ENCODE measurements at regions of chr11 and their contacts with region 1.

Region 1: GRCh38 chr11:66311965-66312548 is 4.8 kb downstream of the CD248 start:
- DNase-seq: peak; percentile 93 to 100 (median 100)
- ATAC-seq: peak; percentile 84
- H3K4me3 ChIP-seq: peak overlapping the region; percentile 92
- H3K4me3 Mint-ChIP-seq: peak overlapping the region; percentile 63 to 97 (median 94)
- H3K27ac ChIP-seq: peak overlapping the region; percentile 79
- H3K27ac Mint-ChIP-seq: peak overlapping the region; percentile 93 to 100 (median 98)
- H3K4me1 ChIP-seq: peaks cover 11 to 34% of the 10 kb centered on the region in 2 donors
- H3K4me1 Mint-ChIP-seq: peaks cover 17 to 34% (median 25%) of the 10 kb centered on the region in 7 donors
- H3K27me3 ChIP-seq: no peaks in the 10 kb centered on the region
- H3K27me3 Mint-ChIP-seq: peaks cover 0 to 2% (median 0%) of the 10 kb centered on the region in 5 donors

Region 2: GRCh38 chr11:66268283-66268951 is 43.6 kb before region 1 on chr11 and contains the start of gene RAB1B:
- CTCF ChIA-PET with region 1: interaction called, 5 read pairs
- POLR2A ChIA-PET with region 1: interaction called, 3 read pairs
- intact Hi-C with region 1: loop called (anchors 1 kb)
- DNase-seq: peak; percentile 99 to 100 (median 99)
- ATAC-seq: peak; percentile 89
- H3K4me3 ChIP-seq: peak within 1 kb of the TSS; percentile 91
- H3K4me3 Mint-ChIP-seq: peak within 1 kb of the TSS; percentile 88 to 100 (median 95)
- H3K27ac ChIP-seq: peak within 1 kb of the TSS; percentile 90
- H3K27ac Mint-ChIP-seq: peak within 1 kb of the TSS; percentile 95 to 99 (median 97)
- H3K4me1 ChIP-seq: peaks cover 16 to 38% of the 10 kb centered on the region in 2 donors
- H3K4me1 Mint-ChIP-seq: peaks cover 26 to 48% (median 34%) of the 10 kb centered on the region in 7 donors
- H3K27me3 ChIP-seq: no peaks in the 10 kb centered on the region
- H3K27me3 Mint-ChIP-seq: peaks cover 0 to 3% (median 0%) of the 10 kb centered on the region in 5 donors
- total RNA-seq, gene RAB1B: 60.6 to 151 (median 70.7) TPM

Region 3: GRCh38 chr11:66328307-66329144 is 16.5 kb after region 1 on chr11:
- CTCF ChIA-PET with region 1: interaction called, 52 read pairs
- POLR2A ChIA-PET with region 1: interaction called, 89 read pairs
- intact Hi-C with region 1: loop called (anchors 1 kb)
- DNase-seq: peak; percentile 72 to 88 (median 80)
- ATAC-seq: peak; percentile 89
- H3K4me3 ChIP-seq: peak overlapping the region; percentile 36
- H3K4me3 Mint-ChIP-seq: peak overlapping the region; percentile 18 to 81 (median 68)
- H3K27ac ChIP-seq: peak overlapping the region; percentile 82
- H3K27ac Mint-ChIP-seq: peak overlapping the region; percentile 65 to 97 (median 91)
- H3K4me1 ChIP-seq: peaks cover 26 to 40% of the 10 kb centered on the region in 2 donors
- H3K4me1 Mint-ChIP-seq: peaks cover 25 to 49% (median 46%) of the 10 kb centered on the region in 7 donors
- H3K27me3 ChIP-seq: no peaks in the 10 kb centered on the region
- H3K27me3 Mint-ChIP-seq: no peaks in the 10 kb centered on the region

Region 4: GRCh38 chr11:66371627-66372415 is 59.8 kb after region 1 on chr11 and contains the start of gene SLC29A2:
- CTCF ChIA-PET with region 1: interaction called, 6 read pairs
- POLR2A ChIA-PET with region 1: interaction called, 16 read pairs
- intact Hi-C with region 1: loop called (anchors 1 kb)
- DNase-seq: peak; percentile 53 to 85 (median 80)
- ATAC-seq: peak; percentile 89
- H3K4me3 ChIP-seq: peak within 1 kb of the TSS; percentile 72
- H3K4me3 Mint-ChIP-seq: peak within 1 kb of the TSS; percentile 81 to 96 (median 88)
- H3K27ac ChIP-seq: peak within 1 kb of the TSS; percentile 83
- H3K27ac Mint-ChIP-seq: peak within 1 kb of the TSS; percentile 79 to 95 (median 90)
- H3K4me1 ChIP-seq: peaks cover 4 to 8% of the 10 kb centered on the region in 2 donors
- H3K4me1 Mint-ChIP-seq: peaks cover 0 to 24% (median 13%) of the 10 kb centered on the region in 7 donors
- H3K27me3 ChIP-seq: no peaks in the 10 kb centered on the region
- H3K27me3 Mint-ChIP-seq: peaks cover 0 to 3% (median 0%) of the 10 kb centered on the region in 5 donors
- total RNA-seq, gene SLC29A2: 6.0 to 18.9 (median 12.0) TPM

Region 5: DNA sequence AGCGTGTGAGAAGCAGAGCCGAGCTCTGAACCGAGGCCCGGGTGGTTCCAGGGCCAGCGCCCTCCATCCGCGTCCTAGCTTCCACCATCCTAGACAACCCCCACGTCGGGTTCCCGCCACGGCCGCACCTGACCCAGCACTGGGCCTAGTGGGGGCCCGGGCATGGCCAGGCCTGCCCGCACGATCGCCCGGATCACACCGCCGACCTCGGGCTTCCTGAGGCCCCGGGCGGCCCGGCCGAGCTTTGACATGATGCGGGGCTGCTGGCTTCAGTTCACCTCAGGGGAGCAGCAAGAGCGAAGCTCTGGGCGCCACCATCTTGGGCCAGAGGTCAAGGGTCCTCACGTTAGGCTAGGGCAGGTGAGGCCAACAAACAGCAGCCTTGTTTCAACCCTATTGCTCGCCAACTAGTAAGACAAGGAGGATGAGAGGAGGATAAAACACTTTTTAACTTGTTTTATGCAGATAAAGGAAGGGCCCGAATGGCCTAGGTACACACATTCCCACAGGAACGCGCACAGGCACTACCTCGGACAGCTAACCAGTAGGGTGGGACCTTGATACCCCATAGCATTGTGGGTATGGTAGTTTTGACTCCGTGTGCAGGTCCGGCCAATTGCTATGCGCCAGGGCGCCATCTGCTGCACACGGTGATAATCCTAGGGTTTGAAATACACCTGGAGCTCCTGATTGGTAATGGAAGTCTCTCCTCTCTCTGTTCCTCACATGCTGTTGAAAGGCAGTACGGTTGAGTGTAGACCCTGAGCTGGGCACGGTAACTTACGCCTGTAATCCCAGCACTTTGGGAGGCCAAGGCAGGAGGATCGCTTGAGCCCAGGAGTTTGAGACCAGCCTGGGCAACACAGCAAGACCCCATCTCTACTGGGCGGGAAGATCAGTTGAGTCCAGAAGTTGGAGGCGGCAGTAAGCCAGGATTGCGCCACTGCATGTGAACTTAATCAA is 126.7 kb after region 1 on chr11 and contains the start of gene MRPL11:
- CTCF ChIA-PET with region 1: interaction called, 9 read pairs
- POLR2A ChIA-PET with region 1: interaction called, 8 read pairs
- intact Hi-C with region 1: loop called (anchors 1 kb)
- DNase-seq: peak; percentile 74 to 93 (median 90)
- ATAC-seq: peak; percentile 100
- H3K4me3 ChIP-seq: peak within 1 kb of the TSS; percentile 86
- H3K4me3 Mint-ChIP-seq: peak within 1 kb of the TSS; percentile 83 to 96 (median 90)
- H3K27ac ChIP-seq: peak within 1 kb of the TSS; percentile 84
- H3K27ac Mint-ChIP-seq: peak within 1 kb of the TSS; percentile 84 to 99 (median 94)
- H3K4me1 ChIP-seq: peaks cover 4 to 5% of the 10 kb centered on the region in 2 donors
- H3K4me1 Mint-ChIP-seq: peaks cover 7 to 13% (median 11%) of the 10 kb centered on the region in 7 donors
- H3K27me3 ChIP-seq: no peaks in the 10 kb centered on the region
- H3K27me3 Mint-ChIP-seq: peaks cover 0 to 7% (median 0%) of the 10 kb centered on the region in 5 donors
- total RNA-seq, gene MRPL11: 23.5 to 64.1 (median 24.0) TPM

Region 6: DNA sequence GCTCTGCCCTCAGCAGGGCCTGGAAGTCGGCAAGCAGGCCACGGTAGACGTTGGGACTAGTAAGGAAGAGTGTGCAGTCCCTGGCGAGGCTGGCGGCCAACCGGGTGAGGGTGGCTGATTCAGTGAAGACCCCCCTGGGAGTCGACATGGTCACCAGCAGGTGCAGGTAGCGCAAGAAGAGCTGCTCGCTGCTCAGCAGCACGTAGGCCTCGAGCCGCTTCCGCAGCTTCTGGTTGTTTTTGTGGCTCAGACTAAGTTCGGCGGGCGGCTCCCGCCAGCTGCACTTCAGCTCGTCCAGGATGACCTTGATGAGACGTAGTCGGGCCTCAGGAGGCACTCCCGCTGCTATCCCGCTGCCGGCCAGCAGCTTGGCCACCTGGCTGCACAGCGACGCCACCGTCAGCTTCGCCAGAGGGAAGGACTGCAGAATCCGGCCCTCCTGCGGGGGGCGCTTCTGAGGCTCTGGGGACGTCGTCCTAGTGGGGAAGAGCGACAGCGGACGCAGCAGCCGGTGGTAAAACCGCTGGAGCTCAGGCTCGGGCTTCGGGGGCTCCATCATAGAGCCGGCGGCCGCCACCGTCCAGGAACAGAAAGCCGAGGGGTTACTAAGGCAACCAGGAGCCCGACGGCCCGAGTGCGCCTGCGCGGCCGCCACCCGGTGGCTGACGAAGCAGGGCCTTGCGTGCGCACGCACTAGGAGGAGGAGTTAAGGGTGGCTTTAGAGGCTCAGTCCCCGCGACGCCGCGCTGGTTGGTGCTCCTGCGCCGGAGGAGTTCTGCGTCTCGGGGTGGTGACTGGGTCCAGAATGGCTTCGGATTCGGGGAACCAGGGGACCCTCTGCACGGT is 280.6 kb after region 1 on chr11 and contains the starts of genes CCDC87 and CCS:
- CTCF ChIA-PET with region 1: no interaction called
- POLR2A ChIA-PET with region 1: no interaction called
- intact Hi-C with region 1: loop called in 1 of 2 experiments (anchors 1 kb)
- DNase-seq: peak; percentile 94 to 98 (median 96)
- ATAC-seq: peak; percentile 98
- H3K4me3 ChIP-seq: peak within 1 kb of the TSS; percentile 98
- H3K4me3 Mint-ChIP-seq: peak within 1 kb of the TSS; percentile 89 to 100 (median 98)
- H3K27ac ChIP-seq: peak within 1 kb of the TSS; percentile 94
- H3K27ac Mint-ChIP-seq: peak within 1 kb of the TSS; percentile 90 to 100 (median 97)
- H3K4me1 ChIP-seq: peaks cover 9 to 30% of the 10 kb centered on the region in 2 donors
- H3K4me1 Mint-ChIP-seq: peaks cover 13 to 40% (median 28%) of the 10 kb centered on the region in 7 donors
- H3K27me3 ChIP-seq: no peaks in the 10 kb centered on the region
- H3K27me3 Mint-ChIP-seq: no peaks in the 10 kb centered on the region
- total RNA-seq, gene CCDC87: 0.11 to 1.2 (median 0.60) TPM in 4 of 5 experiments, not detected in the other
- total RNA-seq, gene CCS: 32.8 to 63.5 (median 42.5) TPM